Activated T-helper 1 cell treated with anti-CD3 and anti-CD28 coated beads, Interleukin-12 subunit alpha, Interleukin-12 subunit beta, Interleukin-2, Interleukin-4 antibody, amounts not matched to agents 30 ng/mL and 10 ng/mL and 1 ng/mL, durations not matched to agents 14 hours and 24 hours and 36 hours (primary cell): ENCODE measurements at regions of chr5 and their contacts with region 1.

Region 1: DNA sequence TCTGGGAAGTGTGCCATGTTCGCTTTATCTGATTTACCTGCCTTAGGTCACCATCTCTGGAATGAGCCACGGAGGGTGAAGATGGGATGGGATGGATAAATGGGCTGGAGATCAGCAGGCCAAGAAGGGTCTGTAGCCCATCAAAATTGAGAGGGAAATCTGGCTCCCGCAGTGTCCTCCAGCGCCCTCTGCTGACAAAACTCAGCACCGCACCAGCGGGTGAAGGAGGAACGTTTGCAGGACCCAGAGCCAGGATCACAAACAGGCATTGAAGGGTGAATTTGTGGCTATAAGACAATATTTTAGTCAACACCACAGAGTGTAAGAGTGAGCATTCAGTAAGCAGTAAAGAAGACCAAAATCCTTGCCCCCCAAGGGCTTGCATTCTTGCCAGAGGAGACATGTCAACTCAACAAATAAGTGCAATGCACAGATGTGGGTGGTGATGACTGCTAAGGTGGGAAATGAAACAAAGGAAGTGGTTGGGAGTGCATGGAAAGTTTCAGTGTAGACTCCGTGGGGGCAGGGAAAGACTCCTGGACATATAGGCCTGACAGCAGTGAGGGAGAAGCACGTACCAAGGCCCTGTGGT is 124.4 kb downstream of the TENT4A start:
- DNase-seq: no peak
- H3K4me3 Mint-ChIP-seq: no peak overlapping the region
- H3K27ac Mint-ChIP-seq: no peak overlapping the region
- H3K4me1 Mint-ChIP-seq: peaks cover 13% of the 10 kb centered on the region
- H3K27me3 Mint-ChIP-seq: peaks cover 9% of the 10 kb centered on the region

Region 2: GRCh38 chr5:6540111-6540827 is 297.3 kb before region 1 on chr5:
- intact Hi-C with region 1: no loop called
- DNase-seq: no peak
- H3K4me3 Mint-ChIP-seq: no peak overlapping the region
- H3K27ac Mint-ChIP-seq: no peak overlapping the region
- H3K4me1 Mint-ChIP-seq: no peaks in the 10 kb centered on the region
- H3K27me3 Mint-ChIP-seq: peaks cover 2% of the 10 kb centered on the region

Region 3: DNA sequence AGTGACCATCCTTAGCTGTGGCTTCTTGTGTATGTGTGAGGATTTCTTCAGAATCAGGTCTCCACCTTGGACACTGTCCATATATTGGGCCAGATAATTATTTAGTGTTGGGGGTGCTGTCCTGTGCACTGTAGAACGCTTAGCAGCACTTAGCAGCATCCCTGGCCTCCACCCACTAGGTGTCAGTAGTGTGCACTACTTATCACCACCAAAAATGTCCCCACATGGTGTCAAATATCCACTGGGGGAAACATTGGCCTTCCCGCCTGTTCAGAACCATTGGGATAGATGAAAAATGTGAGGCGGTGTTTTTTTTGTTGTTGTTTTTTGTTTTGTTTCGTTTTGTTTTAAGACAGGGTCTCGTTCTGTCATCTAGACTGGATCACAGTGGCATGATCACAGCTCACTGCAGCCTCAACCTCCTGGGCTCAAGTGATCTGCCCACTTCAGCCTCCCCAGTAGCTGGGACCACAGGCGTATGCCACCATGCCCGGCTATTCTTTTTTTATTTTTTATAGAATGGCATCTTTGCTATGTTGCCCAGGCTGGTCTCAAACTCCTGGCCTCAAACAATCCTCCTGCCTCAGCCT is 56.7 kb before region 1 on chr5:
- intact Hi-C with region 1: loop called (anchors 2 kb)
- DNase-seq: no peak
- H3K4me3 Mint-ChIP-seq: no peak overlapping the region
- H3K27ac Mint-ChIP-seq: no peak overlapping the region
- H3K4me1 Mint-ChIP-seq: peaks cover 6% of the 10 kb centered on the region
- H3K27me3 Mint-ChIP-seq: peaks cover 4% of the 10 kb centered on the region

Region 4: DNA sequence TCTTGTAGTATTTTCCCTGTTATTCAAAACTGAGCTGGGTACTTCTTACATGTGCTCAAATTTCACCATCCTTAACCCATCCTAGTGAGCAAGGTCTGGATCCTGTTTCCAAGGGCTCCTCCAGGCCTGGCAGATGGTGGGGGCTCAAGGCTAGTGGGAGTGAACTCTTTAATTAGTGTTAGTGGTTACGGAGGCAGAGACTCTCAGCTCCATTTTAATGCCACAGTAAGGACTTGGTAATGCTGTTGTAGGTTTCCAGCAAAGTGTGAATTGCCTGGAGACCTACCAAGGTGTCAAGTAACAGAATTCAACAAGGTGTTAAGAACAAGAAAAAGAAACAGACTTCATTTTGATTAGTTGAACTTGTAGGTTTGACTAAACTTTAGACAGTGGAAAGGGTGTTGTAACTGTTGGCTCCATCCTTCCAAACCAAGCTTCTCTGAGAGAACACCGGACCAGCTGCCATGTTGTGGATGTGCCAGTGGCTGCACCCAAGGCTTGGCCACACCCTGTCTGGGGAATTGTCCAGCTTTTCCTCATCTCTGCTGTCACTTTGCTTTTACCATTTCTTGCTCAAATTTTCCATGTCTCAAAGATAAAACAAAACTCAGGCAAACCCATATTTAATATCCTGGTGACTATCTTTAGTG is 657.0 kb after region 1 on chr5:
- intact Hi-C with region 1: no loop called
- DNase-seq: no peak
- H3K4me3 Mint-ChIP-seq: no peak overlapping the region
- H3K27ac Mint-ChIP-seq: no peak overlapping the region
- H3K4me1 Mint-ChIP-seq: no peaks in the 10 kb centered on the region
- H3K27me3 Mint-ChIP-seq: no peaks in the 10 kb centered on the region